ENCODE measurements at regions of chr5 and their contacts with region 1.

Region 1: DNA sequence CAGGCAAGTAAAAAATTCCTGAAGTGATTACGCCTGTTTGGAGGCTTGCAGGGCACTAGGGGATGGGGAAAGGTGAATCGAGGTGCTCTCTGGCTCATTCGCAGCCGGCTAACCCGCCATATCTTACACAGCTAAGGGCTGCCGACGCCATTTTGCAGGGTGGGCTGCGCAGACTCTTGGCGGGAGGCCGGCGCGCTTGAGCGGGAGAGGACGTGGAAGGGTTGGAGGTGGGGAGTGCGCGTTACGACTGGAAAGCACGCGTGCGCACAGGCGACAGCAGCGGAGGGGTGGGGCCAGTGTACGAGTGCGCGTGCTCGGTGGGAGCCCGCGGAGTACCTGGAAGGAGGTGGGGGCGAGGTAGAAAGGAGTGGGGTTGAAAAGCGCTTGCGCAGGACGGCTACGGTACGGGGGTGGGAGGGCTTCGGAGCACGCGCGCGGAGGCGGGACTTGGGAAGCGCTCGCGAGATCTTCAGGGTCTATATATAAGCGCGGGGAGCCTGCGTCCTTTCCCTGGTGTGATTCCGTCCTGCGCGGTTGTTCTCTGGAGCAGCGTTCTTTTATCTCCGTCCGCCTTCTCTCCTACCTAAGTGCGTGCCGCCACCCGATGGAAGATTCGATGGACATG is at the start of gene NPM1:
- DNase-seq: peak; percentile 97
- ATAC-seq: peak; percentile 90
- H3K4me3 ChIP-seq: peak within 1 kb of the TSS; percentile 93 to 96
- H3K27ac ChIP-seq: peak within 1 kb of the TSS; percentile 99
- H3K4me1 ChIP-seq: peaks cover 16% of the 10 kb centered on the region
- H3K27me3 ChIP-seq: no peaks in the 10 kb centered on the region
- CTCF ChIP-seq: no peak
- total RNA-seq, gene NPM1: 1,864 TPM

Region 2: GRCh38 chr5:171192111-171192510 is 195.3 kb before region 1 on chr5:
- CTCF ChIA-PET with region 1: no interaction called
- POLR2A ChIA-PET with region 1: no interaction called
- in situ Hi-C with region 1: no loop called
- intact Hi-C with region 1: no loop called
- DNase-seq: no peak
- ATAC-seq: no peak
- H3K4me3 ChIP-seq: no peak overlapping the region
- H3K27ac ChIP-seq: no peak overlapping the region
- H3K4me1 ChIP-seq: no peaks in the 10 kb centered on the region
- H3K27me3 ChIP-seq: no peaks in the 10 kb centered on the region
- CTCF ChIP-seq: no peak

Region 3: DNA sequence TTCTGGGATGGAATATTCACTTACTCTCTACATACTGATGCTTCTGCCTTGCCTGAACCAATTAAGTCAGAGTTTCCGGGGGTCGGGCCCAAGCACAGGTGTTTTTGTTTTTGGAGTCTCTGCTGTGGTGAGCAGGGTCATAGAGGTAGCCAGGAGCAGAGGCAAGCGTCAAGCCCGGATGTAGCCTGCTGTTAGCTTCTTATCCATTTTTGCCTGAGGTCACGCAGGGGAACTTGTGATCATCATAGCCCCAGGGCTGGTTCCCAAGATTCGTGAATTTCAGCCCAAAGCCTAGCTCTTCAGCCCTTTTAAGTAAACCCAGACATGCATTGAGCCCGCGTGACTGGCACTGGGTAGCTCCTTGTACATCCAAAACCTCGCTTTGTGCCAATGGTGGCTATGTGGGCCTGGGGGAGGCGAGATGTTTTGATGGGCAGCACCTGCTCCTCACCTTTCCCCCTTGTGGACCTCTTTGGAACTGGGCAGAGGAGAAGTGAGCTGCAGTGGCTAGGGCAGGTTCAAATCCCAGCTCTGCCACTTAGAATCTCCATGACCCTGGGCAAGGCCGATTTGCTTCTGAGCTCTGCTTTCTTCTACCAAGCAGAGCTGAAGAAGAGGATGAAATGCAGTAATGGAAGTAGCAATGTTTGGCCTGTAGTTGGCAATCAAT is 65.7 kb after region 1 on chr5:
- CTCF ChIA-PET with region 1: no interaction called
- POLR2A ChIA-PET with region 1: interaction called, 11 read pairs
- in situ Hi-C with region 1: no loop called
- intact Hi-C with region 1: no loop called
- DNase-seq: no peak
- ATAC-seq: no peak
- H3K4me3 ChIP-seq: no peak overlapping the region
- H3K27ac ChIP-seq: no peak overlapping the region
- H3K4me1 ChIP-seq: no peaks in the 10 kb centered on the region
- H3K27me3 ChIP-seq: no peaks in the 10 kb centered on the region
- CTCF ChIP-seq: no peak